Heart right ventricle (tissue), 16 donors: ENCODE measurements at regions of chr9 and their contacts with region 1.

Region 1: DNA sequence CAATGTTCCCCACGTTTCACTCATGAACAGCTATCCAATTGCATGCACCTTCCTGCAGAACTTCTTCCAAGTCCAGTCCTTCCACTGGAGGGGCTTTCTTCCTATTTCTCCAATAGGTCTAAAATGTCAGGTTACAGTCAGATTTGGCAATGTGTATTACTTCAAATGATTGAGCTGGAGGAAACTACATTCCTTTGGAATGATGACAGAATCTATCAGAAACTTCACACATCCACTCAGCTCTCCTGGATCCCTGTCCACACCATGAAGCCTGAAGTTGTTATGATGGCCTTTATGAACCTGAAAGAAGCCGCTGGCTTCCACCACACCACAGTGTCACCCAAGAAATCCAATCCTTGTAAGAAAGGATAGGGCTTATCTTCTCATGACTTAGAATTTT is 32.2 kb downstream of the FBXW2 start:
- DNase-seq: no peak
- ATAC-seq: no peak
- H3K4me3 ChIP-seq: no peak overlapping the region
- H3K27ac ChIP-seq: no peak overlapping the region
- H3K4me1 ChIP-seq: peaks cover 0 to 20% (median 0%) of the 10 kb centered on the region in 9 donors
- H3K27me3 ChIP-seq: no peaks in the 10 kb centered on the region
- CTCF ChIP-seq: no peak

Region 2: DNA sequence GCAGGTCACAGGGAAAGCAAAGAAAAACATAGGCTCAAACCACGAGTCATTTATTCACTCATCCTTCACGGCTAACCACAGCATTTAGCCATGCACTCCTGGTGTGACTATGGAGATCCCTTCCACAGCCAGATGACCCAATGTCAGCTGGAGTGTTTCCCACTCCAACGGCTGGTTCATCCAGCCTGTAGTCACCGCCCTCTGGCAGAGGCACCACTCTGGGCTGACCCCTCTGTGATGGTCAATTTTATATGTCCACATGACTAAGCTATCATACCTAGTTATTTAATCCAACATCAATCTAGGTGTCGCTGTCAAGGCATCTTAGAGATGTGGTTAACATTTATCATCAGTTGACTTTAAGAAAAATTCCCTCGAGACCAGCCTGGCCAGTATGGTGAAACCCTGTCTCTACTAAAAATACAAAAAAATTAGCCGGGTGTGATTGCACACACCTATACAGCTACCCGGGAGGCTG is 125.5 kb after region 1 on chr9:
- intact Hi-C with region 1: no loop called
- DNase-seq: peak in 1 of 2 donors; percentile 30
- ATAC-seq: peak in 7 of 8 donors; percentile 39 to 82 (median 67)
- H3K4me3 ChIP-seq: no peak overlapping the region
- H3K27ac ChIP-seq: peak overlapping the region in 3 of 10 donors; percentile 10 to 36 (median 15)
- H3K4me1 ChIP-seq: peaks cover 0 to 21% (median 9%) of the 10 kb centered on the region in 9 donors
- H3K27me3 ChIP-seq: no peaks in the 10 kb centered on the region
- CTCF ChIP-seq: no peak

Region 3: DNA sequence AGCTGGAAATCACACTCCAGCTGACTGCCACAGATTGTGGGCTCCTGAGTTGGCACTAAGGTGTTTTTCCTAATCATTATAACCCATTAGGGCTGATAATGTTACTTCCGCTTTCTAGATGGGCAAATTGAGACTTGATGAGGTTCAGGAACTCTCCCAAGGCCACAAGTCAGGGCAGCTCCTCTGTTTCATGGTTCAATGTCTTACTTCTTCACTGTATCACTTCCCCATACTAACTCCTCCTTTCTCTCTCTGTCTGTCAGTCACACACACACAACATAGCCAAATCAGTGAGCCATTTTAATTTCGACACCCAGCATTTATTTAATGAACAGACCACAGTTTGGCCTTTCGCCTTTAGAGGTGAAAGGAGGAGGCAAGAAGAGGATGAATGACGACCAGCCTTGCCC is 183.4 kb after region 1 on chr9:
- intact Hi-C with region 1: loop called in 6 of 10 experiments (anchors 5 kb)
- DNase-seq: no peak
- ATAC-seq: no peak
- H3K4me3 ChIP-seq: no peak overlapping the region
- H3K27ac ChIP-seq: no peak overlapping the region
- H3K4me1 ChIP-seq: peaks cover 0 to 19% (median 10%) of the 10 kb centered on the region in 9 donors
- H3K27me3 ChIP-seq: no peaks in the 10 kb centered on the region
- CTCF ChIP-seq: no peak